Psoas muscle (tissue), 8 donors: ENCODE measurements at regions of chr3 and their contacts with region 1.

Region 1: DNA sequence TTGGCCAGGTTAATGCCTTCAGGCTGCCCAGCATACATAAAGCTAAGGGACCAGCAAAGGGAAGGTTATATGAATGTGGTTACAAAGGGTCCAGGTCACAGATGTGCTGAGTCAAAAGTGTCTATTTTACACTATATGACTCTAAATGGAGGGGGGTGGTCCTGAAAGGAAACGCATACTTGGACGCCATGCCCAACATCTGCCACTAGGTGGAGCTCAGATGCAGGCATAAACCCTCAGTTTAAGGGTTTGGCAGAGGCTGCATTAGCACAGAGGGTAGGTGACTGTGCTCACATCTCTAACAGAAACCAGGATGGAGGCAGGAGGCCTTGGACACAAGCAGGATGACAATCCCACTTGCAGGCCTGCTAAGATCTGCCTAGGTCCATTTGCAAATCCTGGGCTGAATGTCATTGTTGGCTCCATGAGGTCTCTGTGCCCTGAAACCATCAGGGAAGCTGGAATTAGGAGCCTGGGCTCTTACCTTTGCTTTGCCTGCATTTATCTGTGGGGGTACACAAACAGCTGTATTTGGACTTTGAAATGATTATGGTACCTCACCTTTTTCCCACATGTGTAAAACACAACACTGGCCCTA is 55.8 kb downstream of the ZNF621 start:
- DNase-seq: peak; percentile 56 to 60
- ATAC-seq: peak; percentile 60 to 78 (median 68)
- H3K4me3 ChIP-seq: no peak overlapping the region
- H3K27ac ChIP-seq: no peak overlapping the region
- H3K4me1 ChIP-seq: no peaks in the 10 kb centered on the region
- H3K27me3 ChIP-seq: no peaks in the 10 kb centered on the region
- CTCF ChIP-seq: peak; percentile 92

Region 2: DNA sequence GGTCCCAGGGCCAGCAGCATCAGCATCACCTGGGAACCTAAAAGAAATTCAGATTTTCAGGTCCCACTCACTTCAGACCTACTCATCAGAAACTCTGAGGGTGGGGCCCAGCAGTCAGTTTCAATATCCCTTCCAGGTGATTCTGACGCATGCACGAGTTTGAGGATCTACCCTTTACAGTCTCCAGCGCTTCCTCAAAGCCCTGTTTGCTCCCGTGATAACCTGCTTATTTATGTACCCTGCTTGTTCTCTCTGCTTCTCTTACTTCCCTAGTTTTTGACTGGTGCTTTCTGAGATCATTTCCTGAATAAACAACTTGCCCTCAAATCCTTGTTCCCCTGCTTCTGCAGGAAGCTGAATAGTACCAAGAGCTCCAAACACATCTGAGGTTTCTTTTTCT is 189.5 kb after region 1 on chr3:
- intact Hi-C with region 1: loop called in 1 of 2 experiments (anchors 10 kb)
- DNase-seq: no peak
- ATAC-seq: no peak
- H3K4me3 ChIP-seq: no peak overlapping the region
- H3K27ac ChIP-seq: no peak overlapping the region
- H3K4me1 ChIP-seq: peaks cover 7% of the 10 kb centered on the region
- H3K27me3 ChIP-seq: no peaks in the 10 kb centered on the region
- CTCF ChIP-seq: no peak

Region 3: DNA sequence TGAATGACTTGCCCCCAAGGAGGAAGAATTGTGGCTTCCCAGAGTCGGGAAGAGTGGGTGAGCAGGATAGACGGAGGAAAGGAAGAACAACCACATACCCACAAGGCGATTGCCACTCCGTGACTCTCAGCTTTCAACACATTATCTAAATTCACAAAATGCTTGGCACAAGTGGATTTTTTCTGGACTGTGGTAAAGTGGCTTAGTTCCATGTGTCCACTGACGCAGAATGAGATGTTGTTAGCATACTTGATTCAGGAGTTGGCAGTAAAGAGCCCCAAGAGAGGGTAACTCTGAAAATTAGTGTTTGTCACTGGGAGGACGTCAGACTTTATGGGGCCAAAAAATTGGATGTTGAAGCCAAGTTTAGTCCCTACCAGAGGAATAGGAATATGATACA is 419.9 kb after region 1 on chr3:
- intact Hi-C with region 1: loop called in 1 of 2 experiments (anchors 10 kb)
- DNase-seq: no peak
- ATAC-seq: peak in 3 of 4 donors; percentile 30 to 59 (median 37)
- H3K4me3 ChIP-seq: no peak overlapping the region
- H3K27ac ChIP-seq: no peak overlapping the region
- H3K4me1 ChIP-seq: peaks cover 2% of the 10 kb centered on the region
- H3K27me3 ChIP-seq: peaks cover 0 to 2% (median 0%) of the 10 kb centered on the region in 3 donors
- CTCF ChIP-seq: no peak

Region 4: GRCh38 chr3:41881233-41881821 is 1300.7 kb after region 1 on chr3:
- intact Hi-C with region 1: loop called (anchors 2 to 5 kb)
- DNase-seq: no peak
- ATAC-seq: peak in 1 of 4 donors; percentile 60
- H3K4me3 ChIP-seq: no peak overlapping the region
- H3K27ac ChIP-seq: no peak overlapping the region
- H3K4me1 ChIP-seq: no peaks in the 10 kb centered on the region
- H3K27me3 ChIP-seq: no peaks in the 10 kb centered on the region
- CTCF ChIP-seq: peak; percentile 75